Activated naive CD4-positive, alpha-beta T cell treated with anti-CD3 and anti-CD28 coated beads for 36 hours (primary cell): ENCODE measurements at regions of chr1 and their contacts with region 1.

Region 1: GRCh38 chr1:156659994-156660751 is 17.0 kb downstream of the NES start:
- DNase-seq: peak; percentile 96
- H3K4me3 Mint-ChIP-seq: peak overlapping the region; percentile 83
- H3K27ac Mint-ChIP-seq: peak overlapping the region; percentile 19
- H3K4me1 Mint-ChIP-seq: peaks cover 46% of the 10 kb centered on the region
- H3K27me3 Mint-ChIP-seq: peaks cover 29% of the 10 kb centered on the region

Region 2: GRCh38 chr1:156583821-156584622 is 76.2 kb before region 1 on chr1:
- CTCF ChIA-PET with region 1: interaction called, 5 read pairs
- intact Hi-C with region 1: loop called (anchors 1 kb)
- DNase-seq: peak; percentile 92
- H3K4me3 Mint-ChIP-seq: no peak overlapping the region
- H3K27ac Mint-ChIP-seq: no peak overlapping the region
- H3K4me1 Mint-ChIP-seq: peaks cover 27% of the 10 kb centered on the region
- H3K27me3 Mint-ChIP-seq: no peaks in the 10 kb centered on the region

Region 3: GRCh38 chr1:156625436-156626078 is 34.6 kb before region 1 on chr1:
- CTCF ChIA-PET with region 1: interaction called, 168 read pairs
- intact Hi-C with region 1: loop called (anchors 1 kb)
- DNase-seq: peak; percentile 65
- H3K4me3 Mint-ChIP-seq: peak overlapping the region; percentile 36
- H3K27ac Mint-ChIP-seq: no peak overlapping the region
- H3K4me1 Mint-ChIP-seq: peaks cover 7% of the 10 kb centered on the region
- H3K27me3 Mint-ChIP-seq: peaks cover 40% of the 10 kb centered on the region

Region 4: DNA sequence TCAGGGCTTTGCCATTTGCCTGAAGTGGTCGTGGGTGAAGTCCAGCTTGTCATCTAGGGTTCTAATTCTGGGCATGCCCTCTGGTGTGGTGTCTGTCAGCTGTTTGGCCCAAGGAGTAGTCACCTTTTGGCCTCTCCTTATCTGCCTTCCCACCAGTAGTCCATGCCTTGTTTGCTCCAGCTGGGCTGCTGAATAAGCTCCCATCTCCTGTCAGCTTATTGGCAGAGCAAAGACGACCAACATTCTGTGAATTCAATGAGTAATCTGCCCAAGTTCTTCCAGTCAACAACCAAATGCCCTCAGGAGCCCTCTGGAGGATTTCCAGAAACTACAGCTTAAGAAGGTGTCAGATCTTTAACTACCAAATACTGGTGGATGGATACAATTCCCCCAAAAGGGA is 11.2 kb before region 1 on chr1:
- CTCF ChIA-PET with region 1: interaction called, 24 read pairs
- intact Hi-C with region 1: no loop called
- DNase-seq: no peak
- H3K4me3 Mint-ChIP-seq: no peak overlapping the region
- H3K27ac Mint-ChIP-seq: no peak overlapping the region
- H3K4me1 Mint-ChIP-seq: no peaks in the 10 kb centered on the region
- H3K27me3 Mint-ChIP-seq: peaks cover 69% of the 10 kb centered on the region

Region 5: GRCh38 chr1:156689035-156689952 is 29.1 kb after region 1 on chr1:
- CTCF ChIA-PET with region 1: interaction called, 22 read pairs
- intact Hi-C with region 1: no loop called
- DNase-seq: peak; percentile 80
- H3K4me3 Mint-ChIP-seq: no peak overlapping the region
- H3K27ac Mint-ChIP-seq: no peak overlapping the region
- H3K4me1 Mint-ChIP-seq: peaks cover 28% of the 10 kb centered on the region
- H3K27me3 Mint-ChIP-seq: peaks cover 46% of the 10 kb centered on the region

Region 6: DNA sequence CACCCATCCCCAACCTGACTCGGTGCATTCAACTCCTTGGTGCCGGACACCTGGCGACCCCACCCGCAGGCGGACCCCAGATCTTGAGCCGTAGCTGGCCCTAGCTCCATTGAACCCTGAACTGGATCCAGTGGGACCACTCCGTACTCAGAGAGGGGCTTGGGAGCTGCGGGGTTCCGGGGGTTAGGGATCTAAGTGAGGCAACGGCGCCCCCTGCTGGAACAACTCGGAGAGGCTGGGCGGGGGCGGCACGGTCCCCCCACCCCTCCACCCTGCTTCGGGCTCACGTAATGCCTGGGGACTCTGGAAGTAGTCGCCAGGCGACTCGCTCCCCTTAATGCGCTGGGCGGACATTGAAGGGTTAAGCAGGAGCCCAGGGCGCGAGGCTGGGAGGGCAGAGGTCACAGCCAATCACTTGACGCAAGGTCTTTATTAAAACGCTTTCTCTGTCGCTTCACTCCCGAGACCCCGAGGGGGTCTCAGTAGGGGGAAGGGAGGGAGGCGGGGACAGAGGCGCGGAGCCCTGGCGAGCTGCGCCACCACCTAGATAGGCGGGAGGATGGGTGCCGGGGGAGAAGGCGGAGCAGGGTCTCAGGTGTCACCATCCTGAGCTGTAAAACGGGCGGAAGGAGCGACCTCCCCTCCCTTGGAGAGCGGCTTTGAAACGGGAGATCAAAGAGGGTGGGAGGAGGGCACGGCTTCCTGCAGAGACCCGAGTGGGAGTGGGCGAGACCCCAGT is 45.9 kb after region 1 on chr1:
- CTCF ChIA-PET with region 1: interaction called, 37 read pairs
- intact Hi-C with region 1: loop called (anchors 1 kb)
- DNase-seq: peak; percentile 77
- H3K4me3 Mint-ChIP-seq: peak overlapping the region; percentile 76
- H3K27ac Mint-ChIP-seq: peak overlapping the region; percentile 46
- H3K4me1 Mint-ChIP-seq: peaks cover 27% of the 10 kb centered on the region
- H3K27me3 Mint-ChIP-seq: peaks cover 25% of the 10 kb centered on the region

Region 7: DNA sequence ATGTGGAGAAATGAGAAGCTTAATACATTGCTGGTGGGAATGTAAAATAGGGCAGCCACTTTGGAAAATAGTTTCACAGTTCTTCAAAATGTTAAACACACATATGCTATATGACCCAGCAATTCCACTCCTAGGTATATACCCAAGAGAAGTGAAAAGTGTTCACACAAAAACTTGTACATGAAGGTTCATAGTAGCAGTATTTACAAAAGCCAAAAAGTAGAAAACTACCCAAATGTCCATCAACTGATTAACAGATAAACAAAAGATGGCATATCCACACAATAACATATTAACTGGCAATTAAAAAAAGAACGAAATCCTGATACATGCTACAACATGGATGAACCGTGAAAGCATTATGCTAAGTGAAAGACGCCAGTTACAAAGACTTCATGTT is 351.7 kb after region 1 on chr1:
- CTCF ChIA-PET with region 1: no interaction called
- intact Hi-C with region 1: no loop called
- DNase-seq: no peak
- H3K4me3 Mint-ChIP-seq: no peak overlapping the region
- H3K27ac Mint-ChIP-seq: no peak overlapping the region
- H3K4me1 Mint-ChIP-seq: no peaks in the 10 kb centered on the region
- H3K27me3 Mint-ChIP-seq: peaks cover 18% of the 10 kb centered on the region

Region 8: DNA sequence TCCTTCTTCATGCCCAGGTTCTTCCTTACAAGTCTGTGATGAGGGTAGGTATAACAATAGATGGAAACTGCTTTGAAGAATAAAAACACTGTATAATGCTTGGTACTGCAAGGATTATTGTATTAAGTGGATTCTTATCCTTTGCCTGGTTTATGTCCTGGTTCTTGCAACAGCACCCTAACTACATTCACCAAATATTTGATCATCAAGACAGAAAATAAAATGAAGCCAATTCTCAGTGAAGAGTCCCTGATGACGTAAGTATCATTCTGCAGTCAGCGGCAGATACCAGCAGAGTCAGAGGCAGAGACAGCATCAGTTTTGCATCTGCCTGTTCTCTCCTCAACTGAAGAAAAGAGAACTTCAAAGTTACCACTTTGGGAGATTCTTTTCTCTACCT is 365.7 kb after region 1 on chr1:
- CTCF ChIA-PET with region 1: no interaction called
- intact Hi-C with region 1: no loop called
- DNase-seq: no peak
- H3K4me3 Mint-ChIP-seq: no peak overlapping the region
- H3K27ac Mint-ChIP-seq: no peak overlapping the region
- H3K4me1 Mint-ChIP-seq: no peaks in the 10 kb centered on the region
- H3K27me3 Mint-ChIP-seq: peaks cover 17% of the 10 kb centered on the region